ENCODE measurements at regions of chr2 and their contacts with region 1.

Region 1: GRCh38 chr2:7984693-7985353 is 697.0 kb upstream of the ID2 start:
- DNase-seq: no peak
- H3K4me3 Mint-ChIP-seq: no peak overlapping the region
- H3K27ac Mint-ChIP-seq: peak overlapping the region; percentile 89
- H3K4me1 Mint-ChIP-seq: peaks cover 32% of the 10 kb centered on the region
- H3K27me3 Mint-ChIP-seq: no peaks in the 10 kb centered on the region

Region 2: GRCh38 chr2:8000870-8001269 is 16.0 kb after region 1 on chr2:
- intact Hi-C with region 1: loop called (anchors 1 kb)
- DNase-seq: no peak
- H3K4me3 Mint-ChIP-seq: no peak overlapping the region
- H3K27ac Mint-ChIP-seq: no peak overlapping the region
- H3K4me1 Mint-ChIP-seq: peaks cover 34% of the 10 kb centered on the region
- H3K27me3 Mint-ChIP-seq: no peaks in the 10 kb centered on the region

Region 3: GRCh38 chr2:8049851-8050571 is 65.2 kb after region 1 on chr2:
- intact Hi-C with region 1: loop called (anchors 2 kb)
- DNase-seq: peak; percentile 63
- H3K4me3 Mint-ChIP-seq: peak overlapping the region; percentile 30
- H3K27ac Mint-ChIP-seq: peak overlapping the region; percentile 86
- H3K4me1 Mint-ChIP-seq: peaks cover 53% of the 10 kb centered on the region
- H3K27me3 Mint-ChIP-seq: no peaks in the 10 kb centered on the region

Region 4: DNA sequence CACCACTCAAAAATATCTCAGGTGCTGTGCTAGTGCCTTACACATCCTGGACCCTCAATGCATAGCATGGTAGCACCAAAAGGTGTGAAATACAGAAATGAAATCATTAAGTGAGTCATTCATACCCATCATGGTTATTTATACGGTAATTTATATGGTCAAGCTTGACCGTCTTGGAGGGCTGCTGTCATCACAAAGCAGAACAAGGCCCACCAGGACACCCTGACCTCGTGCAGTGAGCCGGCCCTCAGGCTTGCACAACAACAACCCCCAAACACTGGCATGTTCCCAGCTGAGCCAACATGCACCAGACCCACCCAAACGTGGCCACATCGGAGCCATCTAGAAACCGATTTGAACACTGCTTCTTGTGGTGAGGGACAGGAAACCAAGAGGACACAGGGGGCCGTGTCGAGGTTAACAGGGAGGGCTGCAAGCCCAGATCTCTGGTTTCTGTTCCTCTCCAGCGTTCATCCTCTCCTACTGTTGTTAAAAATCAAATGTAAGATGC is 318.6 kb after region 1 on chr2:
- intact Hi-C with region 1: loop called (anchors 2 kb)
- DNase-seq: peak; percentile 82
- H3K4me3 Mint-ChIP-seq: peak overlapping the region; percentile 49
- H3K27ac Mint-ChIP-seq: peak overlapping the region; percentile 47
- H3K4me1 Mint-ChIP-seq: peaks cover 81% of the 10 kb centered on the region
- H3K27me3 Mint-ChIP-seq: no peaks in the 10 kb centered on the region

Region 5: DNA sequence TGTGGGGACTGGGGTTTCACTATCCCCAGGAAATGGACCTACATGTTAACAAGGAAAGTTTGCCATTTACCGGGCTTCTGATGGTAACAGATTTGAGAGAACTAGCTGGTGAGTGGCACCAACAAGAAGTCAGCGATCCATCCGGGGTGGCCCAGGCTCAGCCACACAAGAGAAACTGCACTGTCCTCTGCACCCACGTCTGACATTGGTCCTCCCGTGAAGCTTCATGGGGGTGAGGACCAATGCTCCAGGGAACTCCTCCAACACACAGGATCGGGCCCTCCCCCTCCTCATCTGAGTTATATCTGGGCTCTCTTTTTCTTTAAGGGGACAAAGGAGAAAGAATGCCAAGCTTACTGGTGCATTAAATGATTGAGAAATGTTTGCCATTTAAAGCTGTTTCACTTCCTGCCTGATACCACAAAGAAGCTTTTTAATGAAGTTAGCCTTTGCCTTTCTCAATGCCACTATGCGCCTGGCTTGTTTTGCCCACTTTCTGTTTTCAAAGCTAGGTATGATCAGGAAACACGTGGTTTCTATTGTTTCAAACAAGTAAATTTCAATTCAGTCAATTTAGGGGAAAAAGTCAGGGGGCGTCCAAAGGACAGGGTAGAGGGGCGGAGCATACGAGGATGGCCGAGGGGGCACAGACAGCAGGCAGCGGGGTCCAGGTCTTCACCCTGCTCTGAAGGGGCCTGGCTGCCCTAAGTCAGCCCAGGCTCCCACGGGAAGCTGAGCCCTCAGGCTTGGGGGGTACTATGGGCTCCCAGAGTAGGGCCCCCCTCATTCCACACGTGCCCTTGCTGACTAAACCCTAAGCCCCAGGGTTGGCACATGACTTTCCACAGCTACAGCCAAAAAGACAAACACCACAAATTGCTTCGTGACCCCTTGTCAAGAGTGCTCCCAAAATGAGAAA is 493.0 kb after region 1 on chr2:
- intact Hi-C with region 1: loop called (anchors 5 kb)
- DNase-seq: no peak
- H3K4me3 Mint-ChIP-seq: peak overlapping the region; percentile 5
- H3K27ac Mint-ChIP-seq: peak overlapping the region; percentile 72
- H3K4me1 Mint-ChIP-seq: peaks cover 79% of the 10 kb centered on the region
- H3K27me3 Mint-ChIP-seq: no peaks in the 10 kb centered on the region

Measured in activated T-helper 2 cell treated with anti-CD3 and anti-CD28 coated beads, Interferon-gamma antibody, Interleukin-2, Interleukin-4, amounts not matched to agents 10 μg/mL and 5 μg/mL and 100 μg/mL, durations not matched to agents 14 hours and 24 hours and 36 hours (primary cell).